CD4-positive, alpha-beta T cell (primary cell): ENCODE measurements at regions of chr2 and their contacts with region 1.

Region 1: GRCh38 chr2:112008910-112009485 is 46.1 kb upstream of the TMEM87B start:
- DNase-seq: no peak
- ATAC-seq: no peak
- H3K4me3 ChIP-seq: no peak overlapping the region
- H3K4me3 Mint-ChIP-seq: no peak overlapping the region
- H3K27ac ChIP-seq: no peak overlapping the region
- H3K27ac Mint-ChIP-seq: no peak overlapping the region
- H3K4me1 ChIP-seq: no peaks in the 10 kb centered on the region
- H3K4me1 Mint-ChIP-seq: no peaks in the 10 kb centered on the region
- H3K27me3 ChIP-seq: no peaks in the 10 kb centered on the region
- H3K27me3 Mint-ChIP-seq: no peaks in the 10 kb centered on the region
- CTCF ChIP-seq: no peak

Region 2: DNA sequence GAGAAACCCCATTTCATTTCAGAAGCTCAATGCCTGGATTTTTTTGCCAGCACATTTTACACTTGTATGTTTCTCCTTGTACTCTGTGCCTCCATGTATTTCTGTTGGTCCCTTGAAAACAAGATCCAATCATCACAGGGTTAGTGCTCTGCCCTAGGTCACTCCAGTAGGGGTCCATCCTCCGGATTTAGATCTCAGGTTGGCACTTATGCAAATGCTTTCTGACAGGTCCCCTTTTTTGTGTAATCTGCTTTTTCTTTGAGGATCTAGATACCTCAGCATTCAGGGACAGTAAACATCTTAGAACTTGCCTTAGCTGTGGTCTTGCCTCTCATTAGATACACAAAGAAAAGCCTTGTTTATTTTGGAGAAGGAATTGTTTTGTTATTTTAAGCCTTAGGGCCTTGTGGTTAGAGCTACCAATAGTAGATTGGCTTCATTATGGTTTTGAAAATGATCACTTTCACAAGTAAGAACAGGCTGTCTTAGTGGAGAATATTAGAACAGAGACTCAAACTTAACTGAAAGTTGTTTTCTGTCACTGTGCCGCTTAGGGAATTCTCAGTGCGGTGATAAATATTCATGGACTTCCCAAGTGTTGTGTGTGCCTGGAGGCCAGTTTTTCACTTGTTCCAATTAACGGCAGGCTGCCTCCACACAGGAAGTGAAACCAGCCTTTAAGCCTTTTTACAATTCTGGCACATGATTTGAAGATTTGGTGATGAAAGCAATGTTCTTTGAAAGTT is 102.8 kb before region 1 on chr2:
- CTCF ChIA-PET with region 1: no interaction called
- POLR2A ChIA-PET with region 1: no interaction called
- intact Hi-C with region 1: no loop called
- DNase-seq: peak in 1 of 14 experiments; percentile 29
- ATAC-seq: peak; percentile 29
- H3K4me3 ChIP-seq: no peak overlapping the region
- H3K4me3 Mint-ChIP-seq: no peak overlapping the region
- H3K27ac ChIP-seq: no peak overlapping the region
- H3K27ac Mint-ChIP-seq: peak overlapping the region; percentile 57
- H3K4me1 ChIP-seq: no peaks in the 10 kb centered on the region
- H3K4me1 Mint-ChIP-seq: peaks cover 13% of the 10 kb centered on the region
- H3K27me3 ChIP-seq: no peaks in the 10 kb centered on the region
- H3K27me3 Mint-ChIP-seq: no peaks in the 10 kb centered on the region
- CTCF ChIP-seq: no peak

Region 3: GRCh38 chr2:111990856-111991255 is 18.1 kb before region 1 on chr2:
- CTCF ChIA-PET with region 1: no interaction called
- POLR2A ChIA-PET with region 1: no interaction called
- intact Hi-C with region 1: loop called in 1 of 2 experiments (anchors 2 kb)
- DNase-seq: no peak
- ATAC-seq: no peak
- H3K4me3 ChIP-seq: no peak overlapping the region
- H3K4me3 Mint-ChIP-seq: no peak overlapping the region
- H3K27ac ChIP-seq: no peak overlapping the region
- H3K27ac Mint-ChIP-seq: no peak overlapping the region
- H3K4me1 ChIP-seq: no peaks in the 10 kb centered on the region
- H3K4me1 Mint-ChIP-seq: no peaks in the 10 kb centered on the region
- H3K27me3 ChIP-seq: no peaks in the 10 kb centered on the region
- H3K27me3 Mint-ChIP-seq: peaks cover 4% of the 10 kb centered on the region
- CTCF ChIP-seq: no peak